Adrenal gland (tissue), 19 donors: ENCODE measurements at regions of chr4 and their contacts with region 1.

Region 1: GRCh38 chr4:119628308-119629141 is at the start of gene PDE5A:
- DNase-seq: peak; percentile 71 to 83 (median 78)
- H3K4me3 ChIP-seq: peak within 1 kb of the TSS; percentile 49 to 89 (median 67)
- H3K27ac ChIP-seq: peak within 1 kb of the TSS in 4 of 5 donors; percentile 62 to 89 (median 72)
- H3K4me1 ChIP-seq: peaks cover 4 to 11% of the 10 kb centered on the region in 2 donors
- H3K27me3 ChIP-seq: no peaks in the 10 kb centered on the region
- CTCF ChIP-seq: peak; percentile 38 to 84 (median 70)
- POLR2A ChIP-seq: no peak
- total RNA-seq, gene PDE5A: 6.7 to 23.2 (median 20.5) TPM

Region 2: GRCh38 chr4:119268451-119268850 is 360.1 kb before region 1 on chr4:
- intact Hi-C with region 1: no loop called
- DNase-seq: no peak
- H3K4me3 ChIP-seq: no peak overlapping the region
- H3K27ac ChIP-seq: no peak overlapping the region
- H3K4me1 ChIP-seq: no peaks in the 10 kb centered on the region
- H3K27me3 ChIP-seq: no peaks in the 10 kb centered on the region
- CTCF ChIP-seq: no peak
- POLR2A ChIP-seq: no peak

Region 3: GRCh38 chr4:119564106-119564505 is 64.4 kb before region 1 on chr4:
- intact Hi-C with region 1: loop called (anchors 5 to 10 kb)
- DNase-seq: no peak
- H3K4me3 ChIP-seq: no peak overlapping the region
- H3K27ac ChIP-seq: no peak overlapping the region
- H3K4me1 ChIP-seq: no peaks in the 10 kb centered on the region
- H3K27me3 ChIP-seq: no peaks in the 10 kb centered on the region
- CTCF ChIP-seq: no peak
- POLR2A ChIP-seq: no peak

Region 4: GRCh38 chr4:120034913-120035312 is 406.4 kb after region 1 on chr4:
- intact Hi-C with region 1: no loop called
- DNase-seq: no peak
- H3K4me3 ChIP-seq: no peak overlapping the region
- H3K27ac ChIP-seq: no peak overlapping the region
- H3K4me1 ChIP-seq: no peaks in the 10 kb centered on the region
- H3K27me3 ChIP-seq: no peaks in the 10 kb centered on the region
- CTCF ChIP-seq: no peak
- POLR2A ChIP-seq: no peak

Region 5: GRCh38 chr4:120049732-120050494 is 421.4 kb after region 1 on chr4:
- intact Hi-C with region 1: loop called in 1 of 2 experiments (anchors 5 kb)
- DNase-seq: peak; percentile 76 to 95 (median 83)
- H3K4me3 ChIP-seq: no peak overlapping the region
- H3K27ac ChIP-seq: peak overlapping the region in 1 of 5 donors; percentile 18
- H3K4me1 ChIP-seq: peaks cover 0 to 4% of the 10 kb centered on the region in 2 donors
- H3K27me3 ChIP-seq: no peaks in the 10 kb centered on the region
- CTCF ChIP-seq: peak; percentile 75 to 87 (median 81)
- POLR2A ChIP-seq: no peak